CD8-positive, alpha-beta T cell (primary cell): ENCODE measurements at regions of chr3 and their contacts with region 1.

Region 1: DNA sequence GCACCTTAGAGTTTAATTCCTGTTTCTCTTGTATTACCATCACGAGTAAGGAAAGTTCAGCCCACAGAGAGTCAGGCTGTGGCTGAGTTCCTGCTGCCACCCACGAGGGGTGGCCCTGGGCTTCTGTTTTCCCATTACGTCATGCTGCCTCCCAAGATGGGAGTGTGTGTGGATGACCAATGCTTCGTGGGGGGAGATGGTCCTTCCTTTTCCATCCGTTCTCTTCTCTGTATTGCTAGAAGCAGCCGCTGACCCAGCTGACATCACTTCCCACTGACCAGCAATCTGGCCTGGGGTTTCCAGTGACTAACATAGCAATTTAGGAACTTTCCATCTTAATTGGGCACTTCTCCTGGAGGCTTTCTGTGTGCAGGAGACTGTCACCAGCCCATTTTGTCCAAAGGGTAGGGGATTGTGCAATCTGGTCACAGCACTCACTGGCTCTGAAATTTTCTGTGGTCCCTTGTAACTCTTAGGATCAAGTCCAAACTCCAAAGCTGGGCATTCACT is 9.3 kb downstream of the IRAK2 start:
- DNase-seq: peak in 1 of 9 experiments; percentile 51
- ATAC-seq: no peak
- H3K4me3 ChIP-seq: no peak overlapping the region
- H3K4me3 Mint-ChIP-seq: no peak overlapping the region
- H3K27ac ChIP-seq: no peak overlapping the region
- H3K27ac Mint-ChIP-seq: no peak overlapping the region
- H3K4me1 ChIP-seq: no peaks in the 10 kb centered on the region
- H3K4me1 Mint-ChIP-seq: peaks cover 8% of the 10 kb centered on the region
- H3K27me3 ChIP-seq: no peaks in the 10 kb centered on the region
- H3K27me3 Mint-ChIP-seq: no peaks in the 10 kb centered on the region
- CTCF ChIP-seq: no peak

Region 2: GRCh38 chr3:8366214-8366810 is 1807.7 kb before region 1 on chr3:
- CTCF ChIA-PET with region 1: no interaction called
- POLR2A ChIA-PET with region 1: no interaction called
- intact Hi-C with region 1: loop called in 1 of 2 experiments (anchors 10 kb)
- DNase-seq: no peak
- ATAC-seq: no peak
- H3K4me3 ChIP-seq: no peak overlapping the region
- H3K4me3 Mint-ChIP-seq: no peak overlapping the region
- H3K27ac ChIP-seq: no peak overlapping the region
- H3K27ac Mint-ChIP-seq: no peak overlapping the region
- H3K4me1 ChIP-seq: no peaks in the 10 kb centered on the region
- H3K4me1 Mint-ChIP-seq: peaks cover 9% of the 10 kb centered on the region
- H3K27me3 ChIP-seq: no peaks in the 10 kb centered on the region
- H3K27me3 Mint-ChIP-seq: peaks cover 3% of the 10 kb centered on the region
- CTCF ChIP-seq: no peak

Region 3: GRCh38 chr3:10074666-10075065 is 99.3 kb before region 1 on chr3:
- CTCF ChIA-PET with region 1: no interaction called
- POLR2A ChIA-PET with region 1: no interaction called
- intact Hi-C with region 1: no loop called
- DNase-seq: no peak
- ATAC-seq: no peak
- H3K4me3 ChIP-seq: no peak overlapping the region
- H3K4me3 Mint-ChIP-seq: no peak overlapping the region
- H3K27ac ChIP-seq: no peak overlapping the region
- H3K27ac Mint-ChIP-seq: no peak overlapping the region
- H3K4me1 ChIP-seq: no peaks in the 10 kb centered on the region
- H3K4me1 Mint-ChIP-seq: no peaks in the 10 kb centered on the region
- H3K27me3 ChIP-seq: no peaks in the 10 kb centered on the region
- H3K27me3 Mint-ChIP-seq: no peaks in the 10 kb centered on the region
- CTCF ChIP-seq: no peak

Region 4: GRCh38 chr3:11211531-11212298 is 1037.7 kb after region 1 on chr3:
- CTCF ChIA-PET with region 1: no interaction called
- POLR2A ChIA-PET with region 1: no interaction called
- intact Hi-C with region 1: no loop called
- DNase-seq: no peak
- ATAC-seq: no peak
- H3K4me3 ChIP-seq: no peak overlapping the region
- H3K4me3 Mint-ChIP-seq: no peak overlapping the region
- H3K27ac ChIP-seq: no peak overlapping the region
- H3K27ac Mint-ChIP-seq: no peak overlapping the region
- H3K4me1 ChIP-seq: no peaks in the 10 kb centered on the region
- H3K4me1 Mint-ChIP-seq: no peaks in the 10 kb centered on the region
- H3K27me3 ChIP-seq: no peaks in the 10 kb centered on the region
- H3K27me3 Mint-ChIP-seq: no peaks in the 10 kb centered on the region
- CTCF ChIP-seq: no peak